Heart left ventricle (tissue), 16 donors: ENCODE measurements at regions of chr9 and their contacts with region 1.

Region 1: DNA sequence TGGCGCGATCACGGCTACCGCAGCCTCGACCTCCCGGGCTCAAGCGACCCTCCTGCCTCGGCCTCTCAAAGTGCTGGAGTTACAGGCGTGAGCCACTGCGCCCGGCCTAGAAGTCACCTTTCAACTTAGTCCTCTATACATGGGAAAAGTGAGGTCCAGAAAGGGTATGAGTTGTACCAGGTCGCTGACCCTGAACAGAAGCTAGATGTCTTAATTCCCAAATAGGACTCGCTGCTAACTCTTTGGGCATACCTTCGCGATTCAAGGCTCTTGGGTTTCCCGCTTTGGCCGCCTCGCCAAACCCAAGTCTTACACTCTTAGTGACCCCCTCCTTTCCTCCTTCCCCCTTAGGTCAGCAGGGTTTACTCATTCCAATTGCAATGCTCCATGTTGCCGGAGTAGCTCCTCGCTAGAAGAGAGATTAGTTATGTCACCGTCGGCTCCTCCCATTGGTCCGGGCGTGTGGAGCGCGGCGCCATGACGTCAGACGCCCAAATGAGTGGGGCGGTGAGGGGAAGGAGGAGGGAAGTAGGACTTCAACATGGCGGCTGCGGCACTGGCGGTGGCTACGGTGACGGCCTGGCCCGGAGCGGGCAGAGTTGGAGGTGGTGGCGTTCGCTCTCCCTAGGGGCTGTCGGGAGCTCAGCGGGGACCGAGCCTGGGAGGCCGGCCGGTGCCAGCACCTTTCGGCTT is at the start of gene UBAP1:
- DNase-seq: peak; percentile 97 to 98 (median 97)
- ATAC-seq: peak; percentile 99 to 100 (median 100)
- H3K4me3 ChIP-seq: peak within 1 kb of the TSS; percentile 34 to 95 (median 76)
- H3K27ac ChIP-seq: peak within 1 kb of the TSS; percentile 84 to 96 (median 92)
- H3K4me1 ChIP-seq: peaks cover 0 to 23% (median 11%) of the 10 kb centered on the region in 12 donors
- H3K27me3 ChIP-seq: no peaks in the 10 kb centered on the region
- CTCF ChIP-seq: peak in 2 of 12 donors; percentile 7 to 9
- POLR2A ChIP-seq: peak in 1 of 2 donors; percentile 81
- total RNA-seq, gene UBAP1: 35.1 to 55.6 (median 43.1) TPM

Region 2: DNA sequence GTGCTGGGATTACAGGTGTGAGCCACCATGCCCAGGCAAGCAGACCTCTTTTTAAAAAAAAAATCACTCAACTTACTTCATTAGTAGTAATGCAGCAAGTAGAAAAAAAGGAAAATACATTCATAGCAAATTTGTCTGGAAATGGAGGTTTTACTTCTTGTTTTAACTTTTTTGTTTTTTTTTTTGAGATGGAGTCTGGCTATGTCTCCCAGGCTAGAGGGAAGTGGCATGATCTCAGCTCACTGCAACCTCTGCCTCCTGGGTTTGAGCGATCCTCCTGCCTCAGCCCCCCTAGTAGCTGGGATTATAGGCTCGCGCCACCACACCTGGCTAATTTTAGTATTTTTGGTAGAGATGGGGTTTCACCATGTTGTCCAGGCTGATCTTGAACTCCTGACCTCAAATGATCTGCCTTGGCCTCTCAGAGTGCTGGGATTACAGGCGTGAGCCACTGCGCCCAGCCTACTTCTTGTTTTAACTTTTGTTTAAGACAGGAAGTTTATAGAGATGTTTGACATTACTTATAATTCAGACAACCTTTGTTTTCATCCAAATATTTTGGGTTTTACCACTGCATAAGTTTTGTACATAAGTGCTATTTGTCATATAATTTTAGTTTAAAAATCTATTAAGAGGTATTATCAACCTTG is 335.2 kb before region 1 on chr9:
- intact Hi-C with region 1: no loop called
- DNase-seq: peak in 1 of 5 donors; percentile 37
- ATAC-seq: peak in 1 of 4 donors; percentile 29
- H3K4me3 ChIP-seq: no peak overlapping the region
- H3K27ac ChIP-seq: peak overlapping the region in 2 of 12 donors; percentile 5 to 81
- H3K4me1 ChIP-seq: peaks cover 0 to 88% (median 50%) of the 10 kb centered on the region in 12 donors
- H3K27me3 ChIP-seq: no peaks in the 10 kb centered on the region
- CTCF ChIP-seq: no peak
- POLR2A ChIP-seq: no peak

Region 3: DNA sequence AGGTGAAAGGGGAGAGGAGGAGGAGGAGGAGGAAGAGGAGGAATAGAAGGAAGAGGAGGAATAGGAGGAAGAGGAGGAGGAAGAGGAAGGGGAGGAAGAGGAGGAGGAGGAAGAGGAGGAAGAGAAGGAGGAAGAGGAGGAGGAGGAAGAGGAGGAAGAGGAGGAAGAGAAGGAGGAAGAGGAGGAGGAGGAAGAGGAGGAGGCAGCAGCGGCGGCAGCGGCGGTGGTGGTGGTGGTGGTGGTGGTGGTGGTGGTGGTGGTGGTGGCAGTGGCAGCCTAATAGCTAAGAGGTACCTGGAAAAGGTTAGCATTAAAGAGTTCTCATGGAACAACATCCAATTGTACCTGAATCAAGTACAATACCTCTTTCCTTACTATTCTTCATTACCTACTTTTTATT is 162.5 kb before region 1 on chr9:
- intact Hi-C with region 1: no loop called
- DNase-seq: no peak
- ATAC-seq: no peak
- H3K4me3 ChIP-seq: no peak overlapping the region
- H3K27ac ChIP-seq: no peak overlapping the region
- H3K4me1 ChIP-seq: peaks cover 0 to 5% (median 0%) of the 10 kb centered on the region in 12 donors
- H3K27me3 ChIP-seq: no peaks in the 10 kb centered on the region
- CTCF ChIP-seq: no peak
- POLR2A ChIP-seq: no peak

Region 4: DNA sequence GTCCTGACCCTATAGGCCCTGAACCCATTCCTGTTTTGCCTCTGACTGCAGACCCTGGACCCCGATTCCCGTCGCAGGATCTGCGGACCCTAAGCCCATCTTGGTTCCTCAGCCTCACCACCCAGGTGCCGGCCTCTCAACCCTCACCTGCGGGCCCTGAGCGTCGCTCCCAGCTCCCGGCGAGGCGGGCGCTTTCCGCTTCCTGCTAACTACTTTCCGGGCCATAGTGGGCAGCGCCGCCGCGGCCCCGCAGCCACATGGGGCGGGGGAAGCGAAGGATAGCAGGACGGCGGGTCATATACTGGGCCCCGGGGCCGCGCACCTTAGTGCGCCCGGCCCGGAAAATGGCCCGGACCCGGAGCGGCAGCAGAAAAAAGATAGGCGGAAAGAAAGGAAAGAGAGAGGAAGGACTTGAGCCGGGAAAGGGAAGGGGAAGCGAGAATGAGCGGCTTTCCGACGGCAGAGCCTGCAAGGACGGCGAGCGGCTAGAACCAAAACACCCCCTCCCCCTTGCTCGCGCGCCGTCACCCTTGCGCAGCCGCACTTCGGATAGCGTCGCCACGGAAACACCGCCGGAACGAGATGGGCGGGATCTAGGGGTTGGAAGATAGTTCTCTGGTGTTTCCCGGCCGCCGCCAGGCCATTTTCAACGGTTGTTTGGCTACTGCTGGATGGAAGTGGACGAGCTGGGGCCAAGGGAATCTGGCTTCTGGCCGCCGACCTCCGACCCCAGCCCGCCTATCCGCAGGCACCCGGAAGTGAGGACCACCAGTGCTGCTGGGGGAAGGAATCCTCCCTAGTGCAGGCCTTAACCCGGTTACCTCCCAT is 52.2 kb before region 1 on chr9 and contains the start of gene DCAF12:
- intact Hi-C with region 1: loop called in 6 of 10 experiments (anchors 5 to 10 kb)
- DNase-seq: peak; percentile 93 to 95 (median 93)
- ATAC-seq: peak; percentile 96 to 99 (median 99)
- H3K4me3 ChIP-seq: peak within 1 kb of the TSS; percentile 51 to 98 (median 85)
- H3K27ac ChIP-seq: peak within 1 kb of the TSS; percentile 75 to 99 (median 90)
- H3K4me1 ChIP-seq: peaks cover 6 to 49% (median 41%) of the 10 kb centered on the region in 12 donors
- H3K27me3 ChIP-seq: no peaks in the 10 kb centered on the region
- CTCF ChIP-seq: peak in 3 of 12 donors; percentile 13 to 23 (median 22)
- POLR2A ChIP-seq: peak in 1 of 2 donors; percentile 67
- total RNA-seq, gene DCAF12: 14.2 to 29.4 (median 16.7) TPM

Region 5: GRCh38 chr9:34139477-34140146 is 39.1 kb before region 1 on chr9:
- intact Hi-C with region 1: loop called in 1 of 10 experiments (anchors 5 kb)
- DNase-seq: peak in 4 of 5 donors; percentile 72 to 75 (median 74)
- ATAC-seq: peak; percentile 95 to 99 (median 98)
- H3K4me3 ChIP-seq: no peak overlapping the region
- H3K27ac ChIP-seq: peak overlapping the region in 4 of 12 donors; percentile 1 to 41 (median 9)
- H3K4me1 ChIP-seq: peaks cover 0 to 16% (median 7%) of the 10 kb centered on the region in 12 donors
- H3K27me3 ChIP-seq: no peaks in the 10 kb centered on the region
- CTCF ChIP-seq: peak in 11 of 12 donors; percentile 10 to 61 (median 29)
- POLR2A ChIP-seq: no peak